ENCODE measurements at regions of chr12 and their contacts with region 1.

Region 1: DNA sequence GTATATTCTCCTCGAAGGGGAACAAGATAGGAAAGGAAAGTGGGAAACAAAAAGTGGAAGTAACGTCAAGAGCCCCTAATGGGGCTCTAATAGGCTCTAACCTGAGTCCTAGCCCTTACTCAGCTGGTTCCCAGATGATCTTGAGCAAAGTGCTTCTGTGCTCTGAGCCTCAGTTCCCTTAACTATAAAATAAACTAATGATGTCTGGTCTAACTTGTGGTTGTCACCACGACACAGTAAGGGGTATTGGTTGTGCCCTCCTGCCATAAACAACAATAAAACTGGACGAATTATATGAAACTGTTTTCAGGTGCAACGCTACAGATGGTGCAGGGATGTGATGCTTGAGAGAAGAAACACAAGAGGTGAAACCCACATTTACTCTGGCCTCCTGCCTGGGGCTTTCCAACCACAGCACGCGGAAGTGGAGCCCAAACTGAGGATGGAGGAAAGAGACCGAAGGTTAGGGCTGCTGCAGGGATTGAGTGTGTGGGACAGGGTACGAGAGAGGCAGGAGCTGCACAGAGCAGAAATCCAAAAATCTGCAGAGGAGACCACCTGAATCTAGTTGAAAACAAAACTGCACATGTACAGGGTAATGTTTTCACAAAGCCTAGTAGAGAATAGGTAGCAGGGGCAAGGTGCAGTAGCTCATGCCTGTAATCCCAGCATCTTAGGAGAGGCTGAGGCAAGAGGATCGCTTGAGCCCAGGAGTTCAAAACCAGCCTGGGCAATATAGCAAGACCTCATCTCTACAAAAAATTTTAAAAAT is 45.6 kb upstream of the BCL2L14 start:
- DNase-seq: no peak
- ATAC-seq: no peak
- H3K4me3 ChIP-seq: no peak overlapping the region
- H3K27ac ChIP-seq: peak overlapping the region in 1 of 12 donors; percentile 11
- H3K4me1 ChIP-seq: peaks cover 0 to 14% (median 0%) of the 10 kb centered on the region in 12 donors
- H3K27me3 ChIP-seq: no peaks in the 10 kb centered on the region
- CTCF ChIP-seq: no peak
- POLR2A ChIP-seq: no peak

Region 2: GRCh38 chr12:11885261-11886038 is 139.6 kb before region 1 on chr12:
- intact Hi-C with region 1: loop called in 1 of 10 experiments (anchors 10 kb)
- DNase-seq: peak in 1 of 5 donors; percentile 35
- ATAC-seq: peak; percentile 23 to 81 (median 70)
- H3K4me3 ChIP-seq: no peak overlapping the region
- H3K27ac ChIP-seq: peak overlapping the region in 11 of 12 donors; percentile 32 to 89 (median 54)
- H3K4me1 ChIP-seq: peaks cover 0 to 57% (median 19%) of the 10 kb centered on the region in 12 donors
- H3K27me3 ChIP-seq: no peaks in the 10 kb centered on the region
- CTCF ChIP-seq: no peak
- POLR2A ChIP-seq: no peak

Region 3: GRCh38 chr12:12046401-12046800 is 21.3 kb after region 1 on chr12:
- intact Hi-C with region 1: no loop called
- DNase-seq: no peak
- ATAC-seq: peak in 1 of 4 donors; percentile 13
- H3K4me3 ChIP-seq: no peak overlapping the region
- H3K27ac ChIP-seq: no peak overlapping the region
- H3K4me1 ChIP-seq: no peaks in the 10 kb centered on the region
- H3K27me3 ChIP-seq: no peaks in the 10 kb centered on the region
- CTCF ChIP-seq: no peak
- POLR2A ChIP-seq: no peak

Measured in heart left ventricle (tissue), 16 donors.